Left ventricle myocardium inferior (tissue), 1 donor: ENCODE measurements at regions of chr9 and their contacts with region 1.

Region 1: GRCh38 chr9:121321016-121321503 is 49.0 kb downstream of the STOM start:
- DNase-seq: no peak
- H3K4me3 ChIP-seq: no peak overlapping the region
- H3K27ac ChIP-seq: peak overlapping the region; percentile 95
- H3K4me1 ChIP-seq: peaks cover 100% of the 10 kb centered on the region
- H3K27me3 ChIP-seq: no peaks in the 10 kb centered on the region
- CTCF ChIP-seq: no peak

Region 2: GRCh38 chr9:121213136-121213806 is 107.8 kb before region 1 on chr9:
- intact Hi-C with region 1: loop called (anchors 10 kb)
- DNase-seq: peak; percentile 89
- H3K4me3 ChIP-seq: peak overlapping the region; percentile 24
- H3K27ac ChIP-seq: peak overlapping the region; percentile 76
- H3K4me1 ChIP-seq: peaks cover 10% of the 10 kb centered on the region
- H3K27me3 ChIP-seq: no peaks in the 10 kb centered on the region
- CTCF ChIP-seq: peak; percentile 98

Region 3: DNA sequence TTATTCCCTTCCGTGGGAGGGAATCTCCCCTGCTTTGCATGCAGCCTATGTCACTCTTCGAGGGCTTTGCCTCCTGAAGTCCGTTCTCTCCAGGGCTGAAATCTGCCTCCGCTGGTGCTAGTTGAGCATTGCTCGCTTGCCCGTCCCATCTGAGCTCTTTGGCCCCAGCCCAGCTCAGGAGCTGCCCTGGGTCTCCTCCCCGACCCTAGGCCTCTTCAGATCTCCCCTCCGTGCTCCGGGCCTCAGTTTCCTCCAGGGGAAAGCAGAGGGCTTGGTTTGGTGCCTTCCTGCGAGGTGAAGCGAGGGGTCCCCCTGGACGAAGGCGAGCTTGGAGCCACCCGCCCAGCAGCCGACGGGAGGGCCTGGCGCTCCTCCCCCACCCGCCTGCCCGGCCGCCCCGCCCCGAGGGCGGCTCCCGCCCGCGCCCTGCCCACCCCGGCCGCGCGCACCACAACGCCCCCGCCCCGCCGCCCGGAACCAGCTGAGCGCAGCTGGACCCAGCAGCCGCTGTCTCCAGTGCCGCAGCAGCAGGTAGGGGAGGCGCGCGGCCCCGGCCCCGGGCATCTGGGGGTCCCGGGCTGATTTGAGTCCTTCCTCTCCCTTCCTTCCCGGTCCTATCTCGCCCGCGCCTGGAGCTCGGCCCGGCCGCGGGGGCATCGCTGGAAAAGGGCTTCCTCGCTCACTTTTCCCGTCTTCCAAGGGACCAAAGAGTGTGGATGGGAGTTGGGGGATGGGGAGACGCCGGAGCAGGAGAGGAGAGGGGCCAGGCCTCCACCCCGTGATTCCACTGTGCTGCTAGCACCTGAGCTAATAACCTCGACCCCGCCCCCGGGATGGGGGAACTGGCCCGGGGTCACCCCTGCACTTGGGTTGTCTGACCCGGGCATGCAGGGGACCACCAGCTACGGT is 53.1 kb before region 1 on chr9 and contains the start of gene GSN:
- intact Hi-C with region 1: loop called (anchors 10 kb)
- DNase-seq: peak; percentile 89
- H3K4me3 ChIP-seq: peak within 1 kb of the TSS; percentile 86
- H3K27ac ChIP-seq: peak within 1 kb of the TSS; percentile 88
- H3K4me1 ChIP-seq: peaks cover 66% of the 10 kb centered on the region
- H3K27me3 ChIP-seq: no peaks in the 10 kb centered on the region
- CTCF ChIP-seq: peak; percentile 20
- total RNA-seq, gene GSN: 758 TPM

Region 4: GRCh38 chr9:121369595-121370265 is 48.7 kb after region 1 on chr9 and contains the start of gene STOM:
- intact Hi-C with region 1: loop called (anchors 2 kb)
- DNase-seq: peak; percentile 93
- H3K4me3 ChIP-seq: peak within 1 kb of the TSS; percentile 87
- H3K27ac ChIP-seq: peak within 1 kb of the TSS; percentile 98
- H3K4me1 ChIP-seq: peaks cover 96% of the 10 kb centered on the region
- H3K27me3 ChIP-seq: no peaks in the 10 kb centered on the region
- CTCF ChIP-seq: no peak
- total RNA-seq, gene STOM: 165 TPM